ENCODE measurements at regions of chr16 and their contacts with region 1.

Region 1: DNA sequence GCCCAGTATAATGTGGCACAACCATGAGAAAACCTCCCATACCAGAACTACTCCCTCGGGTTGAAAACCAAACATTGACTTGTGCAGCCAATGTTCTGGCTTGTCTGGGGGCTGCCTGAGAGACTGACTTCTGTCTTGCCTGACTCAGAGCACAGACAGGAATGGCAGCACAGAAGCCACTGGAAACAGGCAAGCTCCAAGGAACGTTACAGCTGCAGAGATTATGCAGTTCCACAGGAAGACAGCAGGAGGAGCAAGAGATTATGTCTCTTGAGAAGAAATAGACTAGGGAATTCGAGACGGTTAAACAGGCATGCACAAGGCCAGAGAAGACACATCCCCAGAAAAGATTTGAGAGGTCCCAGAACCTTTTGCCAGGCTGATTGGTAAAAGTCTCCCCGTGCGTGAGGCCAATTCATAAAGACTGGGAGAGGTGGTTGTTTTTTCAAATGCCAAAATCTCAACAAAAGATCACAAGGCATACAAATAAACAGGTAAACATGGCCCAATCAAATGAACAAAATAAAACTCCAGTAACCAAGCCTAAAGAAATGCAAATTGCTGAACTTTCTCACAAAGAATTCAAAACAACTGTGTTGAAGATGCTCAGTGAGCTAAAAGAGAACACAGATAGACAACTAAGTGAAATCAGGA is 90.6 kb upstream of the CDH5 start:
- H3K4me3 ChIP-seq: no peak overlapping the region
- H3K27ac ChIP-seq: no peak overlapping the region
- H3K4me1 ChIP-seq: no peaks in the 10 kb centered on the region
- CTCF ChIP-seq: peak; percentile 33; the same call in 1 of the 2 replicates

Region 2: DNA sequence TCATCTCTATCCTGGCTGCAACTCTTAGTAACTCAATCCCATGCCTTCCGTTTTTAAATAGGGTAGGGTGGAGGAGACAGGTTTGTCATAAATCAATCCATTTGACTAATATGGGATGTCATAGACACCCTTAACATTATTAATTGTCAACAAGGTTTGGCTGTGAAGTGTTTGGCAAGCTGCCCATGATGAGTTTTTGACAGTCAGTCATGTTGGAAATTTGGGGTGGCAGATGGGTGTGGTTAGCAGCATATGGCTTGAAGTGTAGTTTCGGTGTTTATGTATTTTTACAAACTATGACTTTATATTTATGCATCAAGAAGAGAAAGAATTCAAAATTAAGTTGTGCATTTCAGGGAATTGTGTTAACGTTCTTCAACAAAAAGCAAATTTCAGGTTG is 131.3 kb before region 1 on chr16:
- CTCF ChIA-PET with region 1: no interaction called
- POLR2A ChIA-PET with region 1: no interaction called
- H3K4me3 ChIP-seq: no peak overlapping the region
- H3K27ac ChIP-seq: no peak overlapping the region
- H3K4me1 ChIP-seq: no peaks in the 10 kb centered on the region
- CTCF ChIP-seq: no peak

Region 3: GRCh38 chr16:66315210-66315825 is 39.4 kb after region 1 on chr16:
- CTCF ChIA-PET with region 1: interaction called, 23 read pairs
- POLR2A ChIA-PET with region 1: interaction called, 4 read pairs
- H3K4me3 ChIP-seq: no peak overlapping the region
- H3K27ac ChIP-seq: no peak overlapping the region
- H3K4me1 ChIP-seq: no peaks in the 10 kb centered on the region
- CTCF ChIP-seq: peak; percentile 64; the same call in 1 of the 2 replicates

Region 4: DNA sequence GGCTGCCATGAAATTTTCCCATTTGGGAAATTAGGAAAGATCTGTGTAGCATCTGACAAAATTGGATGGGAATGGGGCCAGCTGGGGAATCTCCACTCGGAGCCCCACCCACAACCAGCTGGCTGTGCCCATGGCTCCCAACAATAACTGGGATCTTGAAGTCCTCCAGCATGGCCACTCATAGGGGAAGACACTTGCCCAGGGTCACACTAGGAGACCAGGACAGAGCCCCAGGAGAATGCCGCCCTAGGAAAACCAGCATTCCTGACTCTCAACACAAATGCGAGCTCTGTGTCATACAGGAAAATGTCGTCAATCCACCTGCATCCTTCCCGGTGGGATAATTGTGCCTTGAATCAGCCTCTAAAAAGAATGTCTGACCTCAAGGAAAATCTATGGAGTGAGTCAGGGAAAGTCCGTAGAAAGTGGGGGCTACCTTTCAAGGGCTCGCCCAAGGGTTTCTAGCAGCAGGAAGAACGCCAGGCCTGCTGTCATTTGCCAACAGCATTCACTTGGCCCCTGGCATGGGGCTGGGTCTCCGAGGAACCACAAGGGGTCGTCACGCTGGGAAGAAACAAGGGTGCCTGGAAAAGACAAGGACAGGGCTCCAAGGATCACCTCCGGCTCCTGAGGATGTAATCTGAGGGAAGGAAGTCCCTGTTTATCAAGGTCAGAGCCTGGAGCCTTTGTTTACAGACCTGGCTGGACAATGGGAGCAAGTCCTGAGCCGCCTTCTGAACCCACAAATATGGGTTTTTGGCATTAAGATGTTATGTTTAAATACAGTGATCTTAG is 106.5 kb after region 1 on chr16:
- CTCF ChIA-PET with region 1: no interaction called
- POLR2A ChIA-PET with region 1: no interaction called
- H3K4me3 ChIP-seq: no peak overlapping the region
- H3K27ac ChIP-seq: no peak overlapping the region; the same call in 1 of the 2 replicates
- H3K4me1 ChIP-seq: peaks cover 5% of the 10 kb centered on the region; the same call in 1 of the 2 replicates
- CTCF ChIP-seq: no peak; the same call in 1 of the 2 replicates